ENCODE measurements at regions of chr3 and their contacts with region 1.

Region 1: DNA sequence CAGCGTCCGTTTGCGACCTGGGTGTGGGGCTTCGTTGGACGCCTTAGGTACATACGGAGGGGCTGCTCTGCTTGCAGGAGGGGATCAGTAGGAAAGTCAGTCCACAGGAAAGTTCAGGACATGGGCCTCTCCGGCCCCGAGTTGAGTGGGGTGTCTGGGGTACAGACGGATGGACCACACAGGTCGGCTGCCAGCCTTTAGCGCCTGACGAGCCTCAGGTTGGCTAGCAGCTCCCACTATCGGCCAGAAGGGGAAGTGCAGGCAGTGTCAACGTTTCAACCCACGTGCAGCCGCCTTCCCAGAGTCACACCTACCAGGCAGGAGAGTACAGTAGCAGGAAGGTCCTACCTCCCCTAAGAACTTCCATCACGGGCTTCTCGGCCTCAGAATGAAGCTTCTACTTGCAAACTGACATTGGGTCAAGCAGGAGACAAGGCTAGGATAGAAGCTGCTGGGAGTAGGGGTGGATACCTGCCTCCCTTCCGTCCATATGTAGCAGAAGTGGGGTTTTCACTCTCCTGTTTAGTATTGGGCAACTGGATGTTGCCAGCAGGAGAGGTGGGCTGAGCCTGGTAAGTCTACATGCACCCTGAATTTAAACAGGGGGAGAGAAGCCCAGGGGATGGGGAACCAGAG is 1.8 kb upstream of the SCN5A start:
- DNase-seq: peak; percentile 49 to 82 (median 67)
- ATAC-seq: peak; percentile 74
- H3K4me3 ChIP-seq: no peak overlapping the region
- H3K4me3 Mint-ChIP-seq: peak overlapping the region; percentile 52
- H3K27ac ChIP-seq: no peak overlapping the region
- H3K27ac Mint-ChIP-seq: no peak overlapping the region
- H3K4me1 ChIP-seq: peaks cover 21% of the 10 kb centered on the region
- H3K4me1 Mint-ChIP-seq: peaks cover 13% of the 10 kb centered on the region
- H3K27me3 ChIP-seq: peaks cover 7 to 17% of the 10 kb centered on the region in 2 experiments
- H3K27me3 Mint-ChIP-seq: peaks cover 9% of the 10 kb centered on the region
- CTCF ChIP-seq: peak; percentile 96

Region 2: GRCh38 chr3:37974121-37975083 is 676.9 kb before region 1 on chr3:
- CTCF ChIA-PET with region 1: no interaction called
- POLR2A ChIA-PET with region 1: no interaction called
- intact Hi-C with region 1: loop called in 1 of 2 experiments (anchors 5 kb)
- DNase-seq: peak; percentile 42 to 84 (median 72)
- ATAC-seq: peak; percentile 99
- H3K4me3 ChIP-seq: no peak overlapping the region
- H3K4me3 Mint-ChIP-seq: no peak overlapping the region
- H3K27ac ChIP-seq: no peak overlapping the region
- H3K27ac Mint-ChIP-seq: no peak overlapping the region
- H3K4me1 ChIP-seq: peaks cover 3% of the 10 kb centered on the region
- H3K4me1 Mint-ChIP-seq: peaks cover 4% of the 10 kb centered on the region
- H3K27me3 ChIP-seq: no peaks in the 10 kb centered on the region
- H3K27me3 Mint-ChIP-seq: no peaks in the 10 kb centered on the region
- CTCF ChIP-seq: peak; percentile 82

Region 3: GRCh38 chr3:38136777-38137614 is 514.3 kb before region 1 on chr3 and contains the start of gene ACAA1:
- CTCF ChIA-PET with region 1: no interaction called
- POLR2A ChIA-PET with region 1: no interaction called
- intact Hi-C with region 1: loop called in 1 of 2 experiments (anchors 5 kb)
- DNase-seq: peak; percentile 93 to 99 (median 97)
- ATAC-seq: peak; percentile 86
- H3K4me3 ChIP-seq: peak within 1 kb of the TSS; percentile 94 to 99
- H3K4me3 Mint-ChIP-seq: peak within 1 kb of the TSS; percentile 93
- H3K27ac ChIP-seq: peak within 1 kb of the TSS; percentile 74 to 88
- H3K27ac Mint-ChIP-seq: peak within 1 kb of the TSS; percentile 98
- H3K4me1 ChIP-seq: peaks cover 45% of the 10 kb centered on the region
- H3K4me1 Mint-ChIP-seq: peaks cover 70% of the 10 kb centered on the region
- H3K27me3 ChIP-seq: no peaks in the 10 kb centered on the region
- H3K27me3 Mint-ChIP-seq: no peaks in the 10 kb centered on the region
- CTCF ChIP-seq: no peak
- total RNA-seq, gene ACAA1: 49.4 to 49.9 TPM

Region 4: DNA sequence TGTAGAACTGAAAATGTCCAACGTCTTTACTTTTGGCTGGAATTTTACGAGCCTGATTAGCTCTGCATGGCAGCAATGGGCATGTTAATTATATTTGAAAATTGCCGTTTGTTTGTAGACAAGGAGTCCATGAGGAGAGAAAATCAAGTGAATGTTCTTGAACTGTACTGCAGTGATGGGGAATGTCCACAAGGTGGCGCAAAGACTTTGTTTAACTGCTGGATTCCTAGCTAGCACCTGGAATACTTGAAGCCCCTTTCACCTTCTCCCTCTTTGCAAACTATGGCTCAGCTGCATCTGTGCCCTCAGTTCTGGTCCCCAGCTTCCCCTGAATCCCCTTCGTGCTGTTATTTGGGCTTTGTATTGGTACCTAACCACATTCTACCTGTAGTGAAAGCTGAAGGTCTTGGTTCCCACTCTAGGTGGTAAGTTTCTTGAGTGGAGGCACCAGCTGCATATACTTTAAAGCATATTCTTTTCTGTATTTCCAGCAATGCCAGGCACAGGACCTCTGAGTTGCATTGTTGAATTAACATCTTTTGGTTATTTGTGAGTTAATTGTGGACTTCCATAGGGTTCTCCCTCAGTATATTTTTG is 129.8 kb before region 1 on chr3:
- CTCF ChIA-PET with region 1: interaction called, 82 read pairs
- POLR2A ChIA-PET with region 1: interaction called, 4 read pairs
- intact Hi-C with region 1: loop called (anchors 1 kb)
- DNase-seq: peak; percentile 24 to 80 (median 65)
- ATAC-seq: peak; percentile 67
- H3K4me3 ChIP-seq: no peak overlapping the region
- H3K4me3 Mint-ChIP-seq: no peak overlapping the region
- H3K27ac ChIP-seq: no peak overlapping the region
- H3K27ac Mint-ChIP-seq: no peak overlapping the region
- H3K4me1 ChIP-seq: peaks cover 30% of the 10 kb centered on the region
- H3K4me1 Mint-ChIP-seq: peaks cover 34% of the 10 kb centered on the region
- H3K27me3 ChIP-seq: no peaks in the 10 kb centered on the region
- H3K27me3 Mint-ChIP-seq: no peaks in the 10 kb centered on the region
- CTCF ChIP-seq: peak; percentile 83

Region 5: GRCh38 chr3:38627956-38628355 is 23.3 kb before region 1 on chr3:
- CTCF ChIA-PET with region 1: interaction called, 12 read pairs
- POLR2A ChIA-PET with region 1: no interaction called
- intact Hi-C with region 1: no loop called
- DNase-seq: peak in 2 of 9 experiments; percentile 5 to 23
- ATAC-seq: no peak
- H3K4me3 ChIP-seq: no peak overlapping the region
- H3K4me3 Mint-ChIP-seq: no peak overlapping the region
- H3K27ac ChIP-seq: no peak overlapping the region
- H3K27ac Mint-ChIP-seq: no peak overlapping the region
- H3K4me1 ChIP-seq: no peaks in the 10 kb centered on the region
- H3K4me1 Mint-ChIP-seq: no peaks in the 10 kb centered on the region
- H3K27me3 ChIP-seq: no peaks in the 10 kb centered on the region
- H3K27me3 Mint-ChIP-seq: no peaks in the 10 kb centered on the region
- CTCF ChIP-seq: no peak

Region 6: DNA sequence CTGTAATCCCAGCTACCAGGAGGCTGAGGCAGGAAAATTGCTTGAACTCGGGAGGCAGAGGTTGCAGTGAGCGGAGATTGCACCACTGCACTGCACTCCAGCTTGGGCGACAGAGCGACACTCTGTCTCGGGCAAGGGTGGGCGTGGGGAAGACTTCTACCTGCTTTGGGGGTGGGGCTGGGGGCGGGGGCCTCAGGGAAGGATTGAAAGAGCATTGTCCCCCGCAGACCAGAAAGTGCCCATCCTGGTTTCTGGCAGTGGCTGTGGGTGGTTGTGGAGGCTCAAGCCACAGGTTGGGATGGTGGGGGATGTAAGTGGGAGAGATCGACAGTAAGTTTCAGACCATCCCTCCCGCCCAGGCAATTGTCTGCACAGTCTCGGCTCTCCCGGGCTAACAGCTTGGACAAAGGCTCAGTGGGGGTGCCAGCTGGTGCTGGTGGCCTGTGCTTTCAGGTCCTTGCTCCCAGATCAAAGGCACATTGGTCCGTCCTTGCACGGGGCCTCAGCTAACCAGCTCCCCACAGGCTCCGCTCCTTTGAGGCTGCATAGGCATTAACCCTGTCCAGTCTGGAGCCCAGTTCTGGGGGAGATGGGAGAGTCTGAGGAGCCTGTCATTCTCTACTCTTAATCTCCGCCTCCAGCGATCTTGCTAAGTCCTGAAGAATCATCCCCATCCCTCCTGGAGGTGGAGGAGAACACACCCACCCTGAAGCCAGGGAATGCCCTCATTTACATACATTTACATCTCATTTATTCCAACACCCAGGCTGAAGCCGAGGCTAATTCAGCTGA is 10.4 kb before region 1 on chr3:
- CTCF ChIA-PET with region 1: interaction called, 19 read pairs
- POLR2A ChIA-PET with region 1: no interaction called
- intact Hi-C with region 1: no loop called
- DNase-seq: no peak
- ATAC-seq: no peak
- H3K4me3 ChIP-seq: no peak overlapping the region
- H3K4me3 Mint-ChIP-seq: no peak overlapping the region
- H3K27ac ChIP-seq: no peak overlapping the region
- H3K27ac Mint-ChIP-seq: no peak overlapping the region
- H3K4me1 ChIP-seq: no peaks in the 10 kb centered on the region
- H3K4me1 Mint-ChIP-seq: no peaks in the 10 kb centered on the region
- H3K27me3 ChIP-seq: no peaks in the 10 kb centered on the region
- H3K27me3 Mint-ChIP-seq: no peaks in the 10 kb centered on the region
- CTCF ChIP-seq: no peak

Region 7: GRCh38 chr3:38843898-38844297 is 192.6 kb after region 1 on chr3:
- CTCF ChIA-PET with region 1: interaction called, 4 read pairs
- POLR2A ChIA-PET with region 1: no interaction called
- intact Hi-C with region 1: loop called in 1 of 2 experiments (anchors 2 kb)
- DNase-seq: peak in 1 of 9 experiments; percentile 16
- ATAC-seq: no peak
- H3K4me3 ChIP-seq: no peak overlapping the region
- H3K4me3 Mint-ChIP-seq: no peak overlapping the region
- H3K27ac ChIP-seq: no peak overlapping the region
- H3K27ac Mint-ChIP-seq: no peak overlapping the region
- H3K4me1 ChIP-seq: no peaks in the 10 kb centered on the region
- H3K4me1 Mint-ChIP-seq: no peaks in the 10 kb centered on the region
- H3K27me3 ChIP-seq: no peaks in the 10 kb centered on the region
- H3K27me3 Mint-ChIP-seq: peaks cover 24% of the 10 kb centered on the region
- CTCF ChIP-seq: no peak